BJ (cell line): ENCODE measurements at regions of chr6 and their contacts with region 1.

Region 1: DNA sequence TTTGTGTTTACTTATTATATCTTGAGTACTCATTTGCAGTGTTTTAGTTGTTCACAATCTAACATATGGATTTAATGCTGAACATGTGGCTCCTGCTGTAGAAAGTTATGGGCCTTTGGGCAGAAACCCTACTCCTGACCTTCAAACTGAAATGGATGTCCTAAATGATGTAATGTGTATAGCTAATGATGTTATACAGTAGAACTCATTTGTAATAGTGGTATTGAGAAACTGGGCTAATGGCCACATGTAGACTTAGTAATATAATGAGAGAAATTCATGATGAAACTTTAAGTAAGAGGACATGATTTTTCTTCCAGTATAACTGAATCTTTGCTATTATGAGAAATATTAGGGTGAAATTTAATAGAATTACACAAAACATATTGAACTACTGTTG is 121.3 kb upstream of the PTPRK start:
- DNase-seq: no peak
- H3K4me3 ChIP-seq: no peak overlapping the region
- H3K27me3 ChIP-seq: no peaks in the 10 kb centered on the region
- CTCF ChIP-seq: no peak

Region 2: DNA sequence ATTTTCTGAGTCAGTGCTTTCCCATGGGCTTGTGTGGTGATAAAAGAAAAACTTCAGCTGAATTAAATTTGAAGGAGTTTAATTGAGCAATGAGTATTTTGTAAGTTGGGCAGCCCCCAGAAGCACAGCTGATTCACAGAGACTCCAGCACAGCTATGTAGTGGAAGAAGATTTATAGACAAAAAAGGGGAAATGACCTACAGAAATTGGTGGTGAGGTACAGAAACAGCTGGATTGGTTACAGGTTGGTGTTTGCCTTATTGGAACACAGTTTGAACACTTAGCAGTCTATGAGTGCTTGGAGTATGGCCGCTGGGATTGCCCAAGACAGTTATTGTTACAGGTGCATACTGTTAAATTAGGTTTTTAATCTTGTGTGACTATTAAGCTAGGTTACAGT is 24.4 kb before region 1 on chr6:
- CTCF ChIA-PET with region 1: no interaction called
- POLR2A ChIA-PET with region 1: interaction called, 18 read pairs
- DNase-seq: no peak
- H3K4me3 ChIP-seq: no peak overlapping the region
- H3K27me3 ChIP-seq: no peaks in the 10 kb centered on the region
- CTCF ChIP-seq: no peak

Region 3: DNA sequence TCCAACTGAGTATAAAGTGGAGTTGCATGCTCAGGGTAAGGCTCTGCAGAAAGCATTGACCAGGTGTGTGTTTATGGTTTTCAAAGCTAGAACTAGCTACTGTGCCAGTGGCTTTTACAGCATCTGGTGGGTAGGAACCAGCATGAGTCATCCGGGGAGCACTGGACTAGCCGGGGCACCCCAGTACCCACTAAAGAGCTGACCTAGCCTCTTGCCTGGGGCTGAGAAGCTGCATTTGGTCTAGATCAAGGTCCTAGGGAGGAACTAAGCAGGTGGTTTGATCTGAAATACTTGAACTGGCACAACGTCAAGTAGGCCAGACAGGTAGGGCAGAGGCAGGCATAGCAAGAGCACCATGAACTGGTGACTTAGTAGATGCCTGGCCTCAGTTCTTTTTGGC is 11.5 kb before region 1 on chr6:
- CTCF ChIA-PET with region 1: no interaction called
- POLR2A ChIA-PET with region 1: no interaction called
- DNase-seq: no peak
- H3K4me3 ChIP-seq: no peak overlapping the region
- H3K27me3 ChIP-seq: no peaks in the 10 kb centered on the region
- CTCF ChIP-seq: no peak